Sciatic nerve (tissue), 2 donors: ENCODE measurements at regions of chr1 and their contacts with region 1.

Region 1: GRCh38 chr1:204989266-204990058 is 53.5 kb upstream of the CNTN2 start:
- DNase-seq: peak; percentile 85
- ATAC-seq: peak; percentile 92

Region 2: DNA sequence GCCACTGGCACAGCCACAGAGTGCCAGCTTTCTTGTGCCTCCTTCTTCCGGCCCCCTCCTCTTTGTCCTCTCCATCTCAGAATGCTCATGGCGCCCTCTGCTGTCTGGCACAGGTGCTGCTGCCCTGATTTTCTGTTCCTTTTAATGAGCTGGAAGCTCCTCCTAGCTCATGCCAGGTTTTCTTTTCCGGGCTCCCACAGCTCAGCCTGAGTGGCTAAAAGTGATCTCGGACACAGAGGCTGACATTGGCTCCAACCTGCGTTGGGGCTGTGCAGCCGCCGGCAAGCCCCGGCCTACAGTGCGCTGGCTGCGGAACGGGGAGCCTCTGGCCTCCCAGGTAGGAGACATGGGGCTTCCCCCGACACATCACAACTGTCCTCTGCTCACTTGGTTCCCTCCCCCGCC is 72.2 kb after region 1 on chr1:
- intact Hi-C with region 1: loop called (anchors 5 kb)
- DNase-seq: peak; percentile 88
- ATAC-seq: peak; percentile 72

Region 3: DNA sequence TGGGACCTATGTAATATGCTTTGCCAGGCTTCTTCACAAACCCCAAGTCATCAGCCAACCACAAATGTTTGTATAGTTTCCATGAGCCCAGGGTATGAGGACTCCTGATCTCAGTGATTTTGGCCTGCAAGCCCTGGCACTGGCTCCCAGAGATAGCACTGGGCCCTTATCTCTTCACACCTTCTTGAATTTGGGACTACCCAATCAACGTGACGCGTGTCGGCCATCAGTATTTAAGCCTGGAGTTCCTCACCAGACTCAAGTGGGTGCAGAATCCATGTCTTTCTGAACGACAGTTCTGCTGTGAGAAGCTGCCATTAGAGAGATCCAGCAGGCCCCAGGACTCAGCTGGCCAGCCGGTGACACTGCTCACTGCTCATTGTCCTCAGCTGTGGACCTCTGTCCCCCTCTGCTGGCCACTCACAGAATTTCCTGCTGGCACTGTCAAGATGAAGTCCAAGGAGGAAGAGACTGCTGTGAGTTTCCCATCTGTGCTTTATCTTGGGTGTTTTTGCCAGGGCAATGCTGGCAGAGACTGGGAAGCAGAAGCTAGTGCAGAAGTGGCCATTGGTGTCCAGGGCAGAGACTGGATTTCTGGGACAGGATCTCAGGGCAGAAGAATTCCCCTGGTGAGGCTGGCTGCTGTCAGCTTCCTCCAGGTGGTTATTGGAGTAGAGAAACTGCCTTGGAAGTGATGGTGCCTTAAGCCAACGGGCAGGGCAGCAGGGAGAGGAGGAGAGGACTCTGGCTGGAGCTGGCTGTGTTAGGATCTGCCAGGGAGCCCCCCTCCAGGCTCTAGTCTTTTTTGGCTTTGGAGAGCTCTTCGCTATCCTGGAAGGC is 266.7 kb after region 1 on chr1:
- intact Hi-C with region 1: loop called (anchors 10 kb)
- DNase-seq: peak; percentile 95
- ATAC-seq: peak; percentile 94

Region 4: DNA sequence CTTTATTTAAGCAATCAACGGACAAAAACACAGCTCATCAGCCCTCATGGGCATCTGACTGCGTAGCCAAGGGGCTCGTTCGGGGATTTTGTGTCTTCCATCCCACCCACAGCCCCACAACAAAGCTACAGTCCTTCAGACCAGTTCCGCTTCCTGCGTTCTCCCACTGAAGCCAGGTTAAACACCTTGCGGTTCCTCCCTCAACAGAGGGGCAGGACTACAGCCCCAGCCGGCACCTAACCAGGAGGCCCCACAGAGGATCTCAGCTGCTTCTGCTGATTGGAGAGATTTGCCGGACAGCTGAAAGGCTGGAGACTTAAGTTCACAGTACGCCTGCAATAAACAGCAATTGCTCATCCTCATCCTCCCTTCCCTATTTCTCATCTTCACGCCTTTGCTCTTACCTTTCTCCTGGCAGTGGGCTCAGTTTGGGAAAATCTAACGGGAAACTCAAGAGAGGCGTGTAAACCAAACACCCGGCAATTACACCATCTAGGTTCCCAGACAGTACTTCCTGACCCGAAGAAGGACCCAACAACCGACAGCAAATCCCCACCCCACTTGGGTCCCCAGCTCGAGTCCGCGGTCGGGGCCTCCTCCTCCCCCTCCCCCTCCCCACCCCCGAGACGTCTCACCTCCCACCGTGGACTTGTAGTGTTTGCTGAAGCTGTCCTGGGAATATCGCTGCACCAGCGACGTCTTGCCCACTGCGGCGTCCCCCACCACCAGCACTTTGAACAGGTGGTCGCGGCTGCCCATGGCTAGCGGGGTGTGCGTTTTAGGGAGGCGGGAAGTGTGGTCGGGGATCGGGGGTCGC is 784.9 kb after region 1 on chr1:
- intact Hi-C with region 1: no loop called
- DNase-seq: no peak
- ATAC-seq: peak; percentile 38